ENCODE measurements at regions of chr3 and their contacts with region 1.

Region 1: GRCh38 chr3:151838583-151839312 is 24.8 kb downstream of the AADAC start:
- DNase-seq: peak; percentile 88
- H3K4me3 Mint-ChIP-seq: no peak overlapping the region
- H3K27ac Mint-ChIP-seq: no peak overlapping the region
- H3K4me1 Mint-ChIP-seq: peaks cover 9% of the 10 kb centered on the region
- H3K27me3 Mint-ChIP-seq: no peaks in the 10 kb centered on the region
- CTCF ChIP-seq: peak; percentile 67

Region 2: GRCh38 chr3:151047636-151048035 is 791.1 kb before region 1 on chr3:
- CTCF ChIA-PET with region 1: no interaction called
- POLR2A ChIA-PET with region 1: no interaction called
- intact Hi-C with region 1: no loop called
- DNase-seq: no peak
- H3K4me3 Mint-ChIP-seq: no peak overlapping the region
- H3K27ac Mint-ChIP-seq: no peak overlapping the region
- H3K4me1 Mint-ChIP-seq: no peaks in the 10 kb centered on the region
- H3K27me3 Mint-ChIP-seq: no peaks in the 10 kb centered on the region
- CTCF ChIP-seq: no peak

Region 3: GRCh38 chr3:151168269-151169094 is 670.3 kb before region 1 on chr3:
- CTCF ChIA-PET with region 1: no interaction called
- POLR2A ChIA-PET with region 1: no interaction called
- intact Hi-C with region 1: loop called (anchors 5 kb)
- DNase-seq: peak; percentile 82
- H3K4me3 Mint-ChIP-seq: no peak overlapping the region
- H3K27ac Mint-ChIP-seq: no peak overlapping the region
- H3K4me1 Mint-ChIP-seq: no peaks in the 10 kb centered on the region
- H3K27me3 Mint-ChIP-seq: no peaks in the 10 kb centered on the region
- CTCF ChIP-seq: peak; percentile 88

Region 4: DNA sequence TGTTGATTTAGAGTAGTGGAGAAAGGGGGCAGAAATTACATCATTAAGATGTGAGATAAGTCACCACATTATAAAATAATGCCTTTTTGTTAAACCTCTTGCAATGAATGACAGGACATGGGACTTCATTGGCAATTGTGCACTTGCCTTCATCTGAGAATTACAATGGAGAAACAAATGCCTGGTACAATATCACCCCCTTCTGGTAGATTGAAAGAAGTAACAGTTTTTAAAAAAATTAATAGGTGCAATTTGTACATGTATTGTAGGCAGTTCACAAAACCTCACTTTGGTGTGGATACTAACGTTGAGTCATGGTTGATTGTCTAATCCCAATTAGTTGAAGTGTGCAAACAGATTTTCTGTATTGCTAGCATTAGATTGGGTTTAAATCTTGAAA is 555.8 kb before region 1 on chr3:
- CTCF ChIA-PET with region 1: no interaction called
- POLR2A ChIA-PET with region 1: no interaction called
- intact Hi-C with region 1: loop called (anchors 2 kb)
- DNase-seq: peak; percentile 73
- H3K4me3 Mint-ChIP-seq: no peak overlapping the region
- H3K27ac Mint-ChIP-seq: no peak overlapping the region
- H3K4me1 Mint-ChIP-seq: no peaks in the 10 kb centered on the region
- H3K27me3 Mint-ChIP-seq: no peaks in the 10 kb centered on the region
- CTCF ChIP-seq: peak; percentile 67

Region 5: GRCh38 chr3:151305101-151305750 is 533.5 kb before region 1 on chr3:
- CTCF ChIA-PET with region 1: interaction called, 10 read pairs
- POLR2A ChIA-PET with region 1: interaction called, 9 read pairs
- intact Hi-C with region 1: no loop called
- DNase-seq: peak; percentile 98
- H3K4me3 Mint-ChIP-seq: peak overlapping the region; percentile 60
- H3K27ac Mint-ChIP-seq: peak overlapping the region; percentile 79
- H3K4me1 Mint-ChIP-seq: peaks cover 89% of the 10 kb centered on the region
- H3K27me3 Mint-ChIP-seq: no peaks in the 10 kb centered on the region
- CTCF ChIP-seq: no peak

Region 6: DNA sequence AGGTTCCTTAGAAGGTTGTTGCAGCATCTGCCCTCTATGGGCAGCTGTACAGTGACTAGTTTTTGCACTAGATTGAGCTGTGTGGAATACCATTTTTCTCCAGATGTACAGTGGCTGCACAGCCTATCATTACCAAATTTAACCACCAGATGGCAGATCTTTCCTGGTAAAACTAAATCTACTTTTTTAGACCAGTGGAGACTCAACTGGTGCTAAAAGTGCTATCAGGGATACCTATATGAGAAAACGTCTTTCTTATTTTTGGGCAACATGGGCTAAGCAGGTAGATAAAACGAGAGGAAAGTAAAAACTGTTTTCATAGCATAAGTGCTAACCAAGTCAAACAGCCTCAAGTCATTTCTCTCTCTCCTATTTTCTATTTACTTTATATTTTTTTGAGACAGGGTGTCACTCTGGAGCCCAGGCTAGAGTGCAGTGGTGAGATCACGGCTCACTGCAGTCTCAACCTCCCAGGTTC is 399.1 kb before region 1 on chr3:
- CTCF ChIA-PET with region 1: interaction called, 74 read pairs
- POLR2A ChIA-PET with region 1: interaction called, 12 read pairs
- intact Hi-C with region 1: loop called (anchors 1 kb)
- DNase-seq: peak; percentile 67
- H3K4me3 Mint-ChIP-seq: no peak overlapping the region
- H3K27ac Mint-ChIP-seq: no peak overlapping the region
- H3K4me1 Mint-ChIP-seq: no peaks in the 10 kb centered on the region
- H3K27me3 Mint-ChIP-seq: no peaks in the 10 kb centered on the region
- CTCF ChIP-seq: peak; percentile 42

Region 7: GRCh38 chr3:151468284-151468917 is 370.3 kb before region 1 on chr3:
- CTCF ChIA-PET with region 1: interaction called, 38 read pairs
- POLR2A ChIA-PET with region 1: interaction called, 4 read pairs
- intact Hi-C with region 1: loop called (anchors 1 kb)
- DNase-seq: peak; percentile 78
- H3K4me3 Mint-ChIP-seq: no peak overlapping the region
- H3K27ac Mint-ChIP-seq: no peak overlapping the region
- H3K4me1 Mint-ChIP-seq: no peaks in the 10 kb centered on the region
- H3K27me3 Mint-ChIP-seq: peaks cover 15% of the 10 kb centered on the region
- CTCF ChIP-seq: peak; percentile 77

Region 8: GRCh38 chr3:151871639-151872468 is 33.1 kb after region 1 on chr3:
- CTCF ChIA-PET with region 1: no interaction called
- POLR2A ChIA-PET with region 1: no interaction called
- intact Hi-C with region 1: no loop called
- DNase-seq: no peak
- H3K4me3 Mint-ChIP-seq: no peak overlapping the region
- H3K27ac Mint-ChIP-seq: no peak overlapping the region
- H3K4me1 Mint-ChIP-seq: peaks cover 5% of the 10 kb centered on the region
- H3K27me3 Mint-ChIP-seq: no peaks in the 10 kb centered on the region
- CTCF ChIP-seq: no peak

Region 9: GRCh38 chr3:151918253-151919029 is 79.7 kb after region 1 on chr3:
- CTCF ChIA-PET with region 1: interaction called, 15 read pairs
- POLR2A ChIA-PET with region 1: no interaction called
- intact Hi-C with region 1: loop called (anchors 1 kb)
- DNase-seq: peak; percentile 50
- H3K4me3 Mint-ChIP-seq: no peak overlapping the region
- H3K27ac Mint-ChIP-seq: no peak overlapping the region
- H3K4me1 Mint-ChIP-seq: no peaks in the 10 kb centered on the region
- H3K27me3 Mint-ChIP-seq: no peaks in the 10 kb centered on the region
- CTCF ChIP-seq: peak; percentile 70

Region 10: DNA sequence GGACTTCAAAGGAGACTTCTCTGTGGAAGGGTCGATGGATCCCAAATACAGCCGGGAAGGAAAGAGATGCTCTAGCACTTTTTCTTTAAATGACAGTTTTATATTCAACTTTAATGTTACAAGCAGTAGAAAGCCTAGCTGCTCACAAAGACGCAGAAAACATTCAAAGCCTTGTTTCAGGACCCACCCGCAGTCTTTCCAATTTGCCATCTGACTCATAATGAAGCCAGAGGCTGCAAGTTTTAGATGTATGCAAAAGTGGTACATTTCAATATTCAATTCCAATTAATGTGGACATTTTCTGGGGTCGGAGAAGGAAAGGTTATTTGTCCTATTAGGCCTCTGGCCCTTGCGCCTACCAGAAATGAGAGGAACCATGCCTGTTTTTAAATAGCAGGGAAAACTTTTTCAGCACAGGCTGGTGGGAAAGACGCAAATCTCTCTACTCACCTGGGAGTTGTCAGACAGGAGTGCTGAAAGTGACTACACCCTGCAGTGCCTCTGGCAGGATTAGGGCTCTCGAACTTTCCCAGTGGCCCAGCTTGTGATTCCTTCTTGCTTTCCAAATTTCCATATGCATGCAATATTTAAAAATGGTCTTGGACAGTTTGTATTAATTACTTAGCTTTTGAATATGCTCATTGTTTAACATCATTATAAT is 312.6 kb after region 1 on chr3:
- CTCF ChIA-PET with region 1: no interaction called
- POLR2A ChIA-PET with region 1: no interaction called
- intact Hi-C with region 1: no loop called
- DNase-seq: peak; percentile 17
- H3K4me3 Mint-ChIP-seq: no peak overlapping the region
- H3K27ac Mint-ChIP-seq: peak overlapping the region; percentile 61
- H3K4me1 Mint-ChIP-seq: peaks cover 16% of the 10 kb centered on the region
- H3K27me3 Mint-ChIP-seq: no peaks in the 10 kb centered on the region
- CTCF ChIP-seq: no peak